Ovary (tissue), 10 donors: ENCODE measurements at regions of chr18 and their contacts with region 1.

Region 1: GRCh38 chr18:22279741-22280452 is 110.5 kb downstream of the GATA6 start:
- DNase-seq: no peak
- H3K4me3 ChIP-seq: no peak overlapping the region
- H3K27ac ChIP-seq: no peak overlapping the region
- H3K4me1 ChIP-seq: peaks cover 3% of the 10 kb centered on the region
- H3K27me3 ChIP-seq: no peaks in the 10 kb centered on the region
- CTCF ChIP-seq: no peak
- EP300 ChIP-seq: no peak
- POLR2A ChIP-seq: no peak

Region 2: GRCh38 chr18:22084547-22084946 is 195.3 kb before region 1 on chr18:
- intact Hi-C with region 1: no loop called
- DNase-seq: no peak
- H3K4me3 ChIP-seq: no peak overlapping the region
- H3K27ac ChIP-seq: no peak overlapping the region
- H3K4me1 ChIP-seq: no peaks in the 10 kb centered on the region
- H3K27me3 ChIP-seq: no peaks in the 10 kb centered on the region
- CTCF ChIP-seq: no peak
- EP300 ChIP-seq: no peak
- POLR2A ChIP-seq: no peak

Region 3: DNA sequence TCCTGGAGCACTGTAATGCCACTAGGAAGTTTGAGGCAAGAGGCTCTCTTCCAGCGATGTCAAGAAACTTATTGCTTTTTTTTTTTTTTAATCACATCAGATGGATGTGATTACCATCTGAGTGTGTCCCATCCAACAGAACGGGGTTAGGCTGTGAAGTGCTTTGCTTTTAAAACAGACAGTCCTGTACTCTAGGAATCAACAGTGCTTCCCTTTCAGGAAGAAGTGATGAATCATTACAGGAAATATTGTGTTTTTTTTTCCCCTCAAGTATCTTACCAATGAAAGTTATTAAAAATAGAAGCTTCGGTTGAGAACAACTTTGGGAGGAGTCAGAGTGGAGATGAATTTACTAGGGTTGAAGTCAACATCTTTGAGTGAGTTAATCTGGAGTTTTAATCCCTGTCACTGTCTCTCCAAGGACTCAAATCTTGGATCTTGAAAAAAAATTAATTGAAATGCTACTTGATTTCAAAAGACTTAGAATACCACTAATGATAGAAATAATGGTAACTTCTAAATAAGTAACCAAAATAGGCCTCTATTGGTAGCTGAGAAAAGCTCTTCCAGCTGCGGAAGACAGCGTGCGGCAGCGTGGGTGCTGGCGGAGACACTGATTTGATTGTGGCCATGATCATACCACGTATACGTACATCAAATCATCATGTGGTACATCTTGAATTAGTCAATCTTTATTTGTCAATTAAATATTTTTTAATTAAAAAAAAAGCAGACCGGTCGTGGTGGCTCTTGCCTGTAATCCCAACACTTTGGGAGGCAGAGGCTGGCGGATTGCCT is 65.0 kb before region 1 on chr18:
- intact Hi-C with region 1: loop called in 1 of 4 experiments (anchors 10 kb)
- DNase-seq: no peak
- H3K4me3 ChIP-seq: no peak overlapping the region
- H3K27ac ChIP-seq: no peak overlapping the region
- H3K4me1 ChIP-seq: peaks cover 7% of the 10 kb centered on the region
- H3K27me3 ChIP-seq: no peaks in the 10 kb centered on the region
- CTCF ChIP-seq: no peak
- EP300 ChIP-seq: no peak
- POLR2A ChIP-seq: no peak

Region 4: DNA sequence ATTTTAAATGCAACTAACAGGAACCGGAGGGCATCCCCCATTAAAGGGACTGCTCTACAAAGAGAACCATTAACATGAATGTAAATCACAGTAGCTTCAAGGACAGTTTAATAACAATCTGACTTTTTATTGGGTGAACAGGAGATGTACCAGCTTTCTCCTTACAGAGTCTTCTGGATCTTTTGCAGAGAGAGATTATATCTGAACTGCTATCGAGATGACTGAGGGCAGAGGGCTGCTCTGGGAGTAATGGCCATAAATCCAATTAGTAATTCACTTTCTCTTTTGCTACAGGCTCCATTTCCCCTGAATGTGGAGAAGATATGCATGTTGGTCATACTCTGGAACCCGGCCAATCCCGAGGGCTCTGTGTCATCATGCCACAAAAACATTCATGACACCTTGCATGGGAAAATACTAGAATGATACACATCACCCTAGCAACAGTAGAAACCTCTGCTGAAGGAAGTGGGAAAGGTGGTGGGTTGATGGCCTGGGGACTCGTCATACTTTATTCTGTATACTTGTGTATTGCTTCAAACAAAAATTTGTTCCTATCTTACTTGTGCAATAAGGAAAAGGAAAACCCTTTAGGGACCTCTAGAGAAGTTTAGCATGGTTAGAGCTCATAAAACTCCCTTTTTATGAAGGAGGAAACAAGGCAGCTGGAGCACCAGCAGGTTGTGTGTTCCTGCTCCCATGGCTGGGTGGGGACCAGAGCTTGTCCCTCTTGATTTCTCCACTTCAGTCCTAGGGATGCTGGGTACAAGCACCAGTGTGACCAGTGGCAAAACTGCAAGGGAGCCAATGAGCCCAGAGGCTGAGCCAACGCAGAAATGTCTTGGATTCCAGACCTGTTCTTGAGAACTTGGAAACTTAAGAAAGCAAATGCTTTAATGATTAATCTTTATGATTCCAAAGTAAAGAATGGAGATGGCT is 111.8 kb after region 1 on chr18:
- intact Hi-C with region 1: no loop called
- DNase-seq: peak in 1 of 5 donors; percentile 24
- H3K4me3 ChIP-seq: no peak overlapping the region
- H3K27ac ChIP-seq: no peak overlapping the region
- H3K4me1 ChIP-seq: no peaks in the 10 kb centered on the region
- H3K27me3 ChIP-seq: no peaks in the 10 kb centered on the region
- CTCF ChIP-seq: no peak
- EP300 ChIP-seq: no peak
- POLR2A ChIP-seq: no peak